ENCODE measurements at regions of chr14 and their contacts with region 1.

Region 1: DNA sequence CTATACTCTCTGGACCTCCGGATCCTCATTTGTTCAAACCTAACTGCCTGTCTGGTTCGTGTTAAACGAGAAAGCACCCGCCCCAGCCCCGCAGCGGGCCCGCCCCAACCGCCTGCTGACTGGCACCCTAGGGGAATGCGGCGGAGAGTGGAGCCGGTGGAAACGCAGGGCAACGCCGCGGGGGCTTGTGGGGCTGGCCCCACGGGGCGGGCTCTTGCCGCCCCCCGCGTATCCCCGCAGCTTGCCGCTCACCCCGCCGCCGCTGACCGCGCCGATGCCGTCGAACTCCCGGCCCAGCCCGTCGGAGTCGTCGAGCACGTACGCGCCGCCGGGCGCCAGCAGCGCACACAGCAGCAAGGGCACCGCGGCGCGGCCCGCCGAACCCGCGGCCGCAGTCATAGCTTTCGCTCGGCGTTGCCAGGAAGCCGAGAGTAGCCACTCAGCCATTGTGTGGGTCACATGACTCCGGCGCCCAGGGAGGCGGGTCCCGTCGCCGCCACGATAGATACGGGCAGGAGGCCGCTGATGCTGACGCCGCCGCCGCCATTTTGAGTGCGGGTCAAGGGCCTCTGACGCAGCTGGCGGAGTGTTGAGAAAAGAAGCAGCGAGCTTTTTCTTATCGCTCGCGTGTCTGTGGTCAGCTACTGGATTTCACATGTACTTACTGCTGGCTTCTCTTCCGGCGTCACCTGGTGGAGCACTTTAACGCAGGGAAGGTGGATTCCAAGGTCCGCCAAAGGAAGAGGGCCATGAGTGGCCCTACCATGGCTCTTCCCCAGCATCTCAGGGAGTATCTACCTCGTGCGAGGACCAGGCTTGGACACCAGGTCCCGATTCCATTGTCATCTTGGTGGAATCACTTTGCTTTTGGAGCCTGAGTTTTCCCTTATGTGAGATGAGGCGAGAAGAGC is at the start of gene GALC:
- DNase-seq: peak; percentile 98
- H3K4me3 Mint-ChIP-seq: peak within 1 kb of the TSS; percentile 93
- H3K27ac Mint-ChIP-seq: peak within 1 kb of the TSS; percentile 96
- H3K4me1 Mint-ChIP-seq: peaks cover 43% of the 10 kb centered on the region
- H3K27me3 Mint-ChIP-seq: no peaks in the 10 kb centered on the region
- total RNA-seq, gene GALC: 14.4 to 14.7 TPM

Region 2: DNA sequence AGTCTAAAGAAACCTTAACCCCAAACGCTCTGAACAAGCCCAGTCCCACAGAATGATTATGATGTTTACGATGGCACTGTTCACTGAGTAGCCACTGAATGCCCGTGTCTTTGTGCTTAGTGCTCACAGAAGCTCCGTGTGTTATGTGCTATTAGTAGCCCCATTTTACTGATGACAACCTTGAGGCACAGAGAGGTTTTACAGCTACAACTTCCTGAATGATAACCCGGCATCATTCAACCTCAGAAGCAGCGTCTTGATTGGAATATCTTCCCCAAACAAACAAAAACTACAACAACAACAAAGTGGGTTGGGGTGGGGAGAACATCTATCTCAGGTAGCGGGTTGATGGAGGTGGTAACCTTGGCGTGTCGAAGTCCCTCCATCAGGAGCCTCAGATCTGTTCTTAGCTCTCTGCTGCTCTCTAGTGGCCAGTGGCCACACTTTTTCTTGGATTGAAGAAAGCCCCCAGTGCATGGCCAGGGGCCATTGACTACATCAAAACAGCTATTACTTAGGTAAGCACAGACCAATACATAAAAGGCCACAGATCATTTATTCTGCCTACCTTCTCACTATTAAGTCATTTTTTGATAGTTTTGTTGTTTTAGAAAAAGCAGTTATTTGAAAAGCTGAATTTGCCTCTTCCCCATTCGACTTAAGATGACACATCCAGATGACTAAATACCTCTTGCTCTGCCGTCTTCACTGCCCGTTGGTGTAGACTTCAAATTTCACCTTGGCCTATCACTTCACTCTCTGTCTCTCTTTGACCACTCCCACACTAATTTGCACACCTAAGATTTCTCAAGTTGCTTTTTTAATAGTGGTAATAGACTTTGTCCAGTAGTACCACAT is 376.9 kb before region 1 on chr14:
- CTCF ChIA-PET with region 1: no interaction called
- POLR2A ChIA-PET with region 1: no interaction called
- intact Hi-C with region 1: no loop called
- DNase-seq: peak; percentile 54
- H3K4me3 Mint-ChIP-seq: no peak overlapping the region
- H3K27ac Mint-ChIP-seq: no peak overlapping the region
- H3K4me1 Mint-ChIP-seq: no peaks in the 10 kb centered on the region
- H3K27me3 Mint-ChIP-seq: no peaks in the 10 kb centered on the region

Region 3: DNA sequence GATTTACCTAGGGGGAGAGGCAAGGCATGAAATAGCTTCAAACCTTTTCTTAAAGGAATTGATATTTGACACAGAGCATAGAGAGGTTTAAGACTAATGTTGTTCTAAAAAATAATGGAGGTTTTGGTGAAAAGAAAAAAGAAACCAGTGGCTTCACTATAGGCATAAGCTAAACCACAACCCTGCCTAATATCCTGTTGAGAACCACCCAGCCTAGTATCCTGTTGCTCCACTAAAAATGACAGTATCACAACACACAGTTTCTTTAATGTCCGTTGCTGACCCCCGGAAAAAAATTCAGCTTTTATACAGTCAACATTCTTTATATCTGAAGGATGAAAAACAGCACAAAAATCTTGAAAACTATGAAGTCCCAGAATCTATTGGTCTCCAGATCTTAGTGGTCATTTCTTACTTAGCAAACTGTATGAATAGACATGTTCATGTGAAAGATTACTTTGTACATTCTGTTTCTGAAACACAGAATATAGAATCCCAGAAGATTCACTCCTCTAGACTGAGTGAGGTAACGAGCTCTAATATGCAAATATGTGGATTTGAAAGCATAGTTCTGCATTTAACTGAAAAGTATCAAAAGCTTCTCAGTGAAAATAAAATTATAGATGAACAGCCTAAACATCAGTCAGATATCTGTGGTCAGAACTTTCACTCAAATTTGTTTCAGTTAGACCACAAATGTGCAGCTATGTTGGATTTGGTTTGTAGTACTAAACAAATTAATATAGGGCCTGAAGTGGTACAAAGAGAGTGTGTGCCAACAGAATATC is 40.5 kb before region 1 on chr14:
- CTCF ChIA-PET with region 1: no interaction called
- POLR2A ChIA-PET with region 1: interaction called, 3 read pairs
- intact Hi-C with region 1: loop called (anchors 2 kb)
- DNase-seq: no peak
- H3K4me3 Mint-ChIP-seq: no peak overlapping the region
- H3K27ac Mint-ChIP-seq: peak overlapping the region; percentile 62
- H3K4me1 Mint-ChIP-seq: peaks cover 21% of the 10 kb centered on the region
- H3K27me3 Mint-ChIP-seq: no peaks in the 10 kb centered on the region

Region 4: DNA sequence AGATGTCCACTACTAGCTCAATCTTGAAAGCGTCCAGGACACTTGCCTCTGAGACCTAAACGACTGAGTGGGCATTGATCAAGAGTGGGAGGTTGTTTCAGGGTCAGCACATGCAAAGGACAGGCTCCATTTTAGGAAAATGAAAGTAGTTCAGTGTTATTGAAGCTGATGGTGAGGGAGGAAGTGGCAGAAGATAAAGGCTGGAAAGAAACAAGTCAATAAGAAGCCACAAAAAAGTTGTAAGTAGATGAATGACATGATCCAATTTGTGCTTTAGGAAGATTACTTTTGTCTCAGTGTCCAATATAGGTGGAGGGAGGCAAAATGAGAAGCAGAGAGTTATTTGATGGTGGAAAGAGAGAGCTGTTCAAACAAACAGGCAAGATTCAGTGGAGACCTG is 33.9 kb after region 1 on chr14:
- CTCF ChIA-PET with region 1: interaction called, 3 read pairs
- POLR2A ChIA-PET with region 1: interaction called, 4 read pairs
- intact Hi-C with region 1: loop called (anchors 2 kb)
- DNase-seq: no peak
- H3K4me3 Mint-ChIP-seq: no peak overlapping the region
- H3K27ac Mint-ChIP-seq: peak overlapping the region; percentile 10
- H3K4me1 Mint-ChIP-seq: peaks cover 72% of the 10 kb centered on the region
- H3K27me3 Mint-ChIP-seq: no peaks in the 10 kb centered on the region

Region 5: DNA sequence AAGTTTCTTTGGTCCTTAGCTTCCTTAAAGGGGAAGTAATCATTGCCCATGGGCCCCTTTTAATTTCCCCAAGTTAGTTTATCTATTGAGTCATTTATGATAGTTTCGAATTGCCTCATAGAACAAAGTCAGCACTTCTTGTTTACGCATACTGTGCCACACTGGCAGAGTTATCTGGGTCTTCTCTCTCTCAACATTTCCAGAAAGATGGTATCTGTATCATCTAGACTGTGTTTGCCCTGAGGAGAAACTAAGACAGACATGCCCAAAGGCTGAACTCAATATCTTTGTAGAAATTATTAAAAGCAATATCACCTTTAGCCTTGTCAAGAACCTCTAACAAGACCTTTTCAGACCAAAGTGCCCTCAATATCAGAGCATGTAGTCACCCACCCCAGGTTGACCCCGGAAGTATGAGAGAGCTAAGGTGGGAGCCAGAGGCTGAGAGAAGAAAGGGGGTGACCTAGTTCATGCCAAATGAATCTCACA is 51.9 kb after region 1 on chr14:
- CTCF ChIA-PET with region 1: interaction called, 3 read pairs
- POLR2A ChIA-PET with region 1: interaction called, 5 read pairs
- intact Hi-C with region 1: loop called (anchors 1 kb)
- DNase-seq: peak; percentile 18
- H3K4me3 Mint-ChIP-seq: no peak overlapping the region
- H3K27ac Mint-ChIP-seq: peak overlapping the region; percentile 77
- H3K4me1 Mint-ChIP-seq: peaks cover 15% of the 10 kb centered on the region
- H3K27me3 Mint-ChIP-seq: no peaks in the 10 kb centered on the region

Region 6: DNA sequence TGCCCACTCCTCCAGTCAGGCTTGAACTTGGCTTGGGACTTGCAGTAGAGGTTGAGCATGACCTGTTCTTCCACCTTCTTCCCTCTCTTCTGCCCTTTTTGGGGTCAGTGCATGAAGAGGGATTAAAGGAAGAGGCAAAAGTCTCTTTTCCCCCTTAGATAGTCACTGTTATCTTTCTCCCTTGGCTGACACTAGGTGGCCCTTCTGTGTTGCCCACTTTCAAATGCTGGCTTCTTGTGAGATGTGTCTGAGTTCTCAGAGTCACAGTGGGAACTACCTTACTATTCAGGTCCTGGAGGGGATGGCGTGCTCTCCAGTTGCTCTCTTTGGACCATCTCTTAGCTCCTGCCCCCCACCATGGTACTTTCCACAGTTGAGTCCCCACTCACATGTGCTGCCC is 85.6 kb after region 1 on chr14:
- CTCF ChIA-PET with region 1: no interaction called
- POLR2A ChIA-PET with region 1: no interaction called
- intact Hi-C with region 1: no loop called
- DNase-seq: no peak
- H3K4me3 Mint-ChIP-seq: no peak overlapping the region
- H3K27ac Mint-ChIP-seq: no peak overlapping the region
- H3K4me1 Mint-ChIP-seq: no peaks in the 10 kb centered on the region
- H3K27me3 Mint-ChIP-seq: no peaks in the 10 kb centered on the region

Region 7: DNA sequence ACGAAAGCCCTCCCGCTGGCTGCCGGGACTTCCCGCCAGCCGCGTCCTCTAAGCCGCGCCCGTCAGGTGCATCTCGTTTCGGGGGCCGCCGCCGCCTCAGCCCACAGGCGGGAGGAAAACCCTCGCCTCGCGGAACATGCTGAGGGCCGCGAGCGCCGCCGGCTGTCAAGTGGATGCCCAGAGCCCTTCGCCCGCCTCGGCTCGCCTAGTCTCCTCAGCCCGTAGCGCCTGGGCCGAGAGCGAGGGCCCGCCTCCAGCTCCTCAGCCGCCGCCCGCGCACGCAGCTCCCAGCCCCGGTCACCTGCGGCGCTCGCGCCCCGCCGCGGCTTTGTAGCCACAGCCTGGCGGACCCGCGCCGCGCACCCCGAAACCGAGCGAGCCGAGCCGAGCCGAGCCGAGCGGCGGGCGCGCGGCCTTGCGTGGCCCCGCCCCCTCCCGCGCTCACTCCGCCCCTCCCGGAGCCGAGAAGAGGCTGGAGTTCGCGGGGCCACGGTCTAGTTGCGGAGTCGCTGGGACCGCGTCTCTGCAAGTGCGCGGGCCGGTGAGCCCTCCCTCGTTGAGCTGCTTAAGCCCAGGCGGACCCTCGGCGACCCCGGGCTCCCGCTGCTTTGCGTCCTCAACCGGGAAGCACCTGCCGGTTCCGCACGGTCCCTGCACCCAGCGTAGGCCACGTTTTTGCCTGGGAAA is 799.7 kb after region 1 on chr14 and contains the start of gene EML5:
- CTCF ChIA-PET with region 1: no interaction called
- POLR2A ChIA-PET with region 1: no interaction called
- intact Hi-C with region 1: loop called (anchors 5 kb)
- DNase-seq: peak; percentile 87
- H3K4me3 Mint-ChIP-seq: peak within 1 kb of the TSS; percentile 89
- H3K27ac Mint-ChIP-seq: peak within 1 kb of the TSS; percentile 74
- H3K4me1 Mint-ChIP-seq: peaks cover 25% of the 10 kb centered on the region
- H3K27me3 Mint-ChIP-seq: peaks cover 3% of the 10 kb centered on the region
- total RNA-seq, gene EML5: 5.7 to 6.2 TPM